Right lobe of liver (tissue), 6 donors: ENCODE measurements at regions of chr6 and their contacts with region 1.

Region 1: DNA sequence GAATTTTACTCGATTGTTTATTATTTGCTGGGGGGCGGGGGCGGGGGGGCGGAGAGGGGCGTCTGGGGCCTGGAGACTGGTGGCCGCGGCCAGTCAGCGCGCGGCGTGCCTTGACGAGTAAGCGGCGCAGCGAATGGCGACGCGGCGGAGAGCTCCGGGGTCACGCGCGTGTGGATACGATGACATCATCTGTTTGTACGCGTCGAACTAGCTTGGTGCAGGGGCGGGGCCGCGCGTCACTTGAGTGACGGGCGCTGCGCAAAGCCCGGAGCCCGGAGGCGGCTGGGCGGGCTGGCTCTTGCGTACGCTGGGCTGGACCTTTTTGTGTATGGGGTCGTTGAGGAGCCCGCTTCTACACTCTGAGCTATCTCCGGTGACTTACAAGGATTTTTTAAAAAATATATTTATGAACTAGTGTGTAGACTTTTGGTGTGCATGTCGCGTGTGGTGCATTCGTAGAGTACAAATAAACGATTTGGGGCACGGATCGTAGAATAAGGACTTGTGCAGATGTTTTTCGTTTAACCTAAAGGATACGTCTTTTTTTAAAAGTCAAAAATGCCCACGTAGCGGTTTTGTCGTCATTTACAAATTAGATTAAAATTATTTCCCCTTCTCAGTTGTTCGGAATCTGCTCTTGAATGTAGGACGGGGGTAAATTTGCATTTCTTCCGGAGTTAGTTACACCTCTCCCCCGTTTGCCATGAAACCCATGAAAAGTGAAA is 2.2 kb upstream of the FOXO3 start:
- DNase-seq: peak; percentile 99
- ATAC-seq: peak; percentile 58 to 75 (median 68)
- H3K4me3 ChIP-seq: peak overlapping the region; percentile 82 to 92 (median 83)
- H3K27ac ChIP-seq: peak overlapping the region; percentile 98 to 99 (median 99)
- H3K4me1 ChIP-seq: peaks cover 0 to 42% (median 12%) of the 10 kb centered on the region in 4 donors
- H3K27me3 ChIP-seq: no peaks in the 10 kb centered on the region
- CTCF ChIP-seq: no peak
- POLR2A ChIP-seq: peak; percentile 72

Region 2: DNA sequence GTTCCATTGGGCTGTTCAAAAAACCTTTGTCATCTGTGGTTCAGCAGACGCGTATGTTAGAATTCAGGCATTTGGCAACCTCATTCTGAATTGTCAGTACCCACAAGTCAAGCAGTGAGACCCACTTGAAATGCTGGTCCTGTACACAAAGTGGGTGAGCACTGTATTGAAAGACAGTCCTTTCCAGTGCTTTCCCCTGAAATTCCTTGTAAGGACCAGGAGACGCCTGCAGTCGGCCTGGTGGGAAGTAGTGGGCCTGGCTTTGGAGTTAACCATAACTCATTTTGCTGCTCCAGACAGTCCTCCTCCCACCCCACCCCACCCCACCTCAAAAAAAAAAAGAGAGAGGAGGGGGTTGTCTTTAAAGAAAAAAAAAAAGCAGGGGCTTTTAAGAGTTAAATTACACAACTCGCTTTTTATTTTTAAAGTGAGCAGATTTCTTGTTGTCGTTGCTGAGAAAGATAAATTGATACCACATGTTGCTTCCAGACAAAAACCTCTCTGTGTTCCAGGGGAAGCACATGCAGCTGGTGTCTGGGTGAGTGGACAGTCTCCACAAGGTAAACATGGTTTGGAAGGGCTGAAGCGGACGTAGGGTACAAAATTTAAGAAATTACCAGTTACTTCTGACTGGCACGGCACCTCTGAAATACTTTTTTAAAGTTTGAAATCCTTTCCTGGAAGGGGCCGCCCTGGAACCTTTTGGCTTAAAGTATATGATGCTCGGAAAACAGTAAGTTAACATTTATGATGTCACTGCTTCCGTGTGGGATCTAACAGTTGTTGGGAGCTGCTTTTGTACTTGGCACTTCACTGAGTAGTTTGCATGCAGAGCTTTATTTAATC is 97.5 kb after region 1 on chr6:
- intact Hi-C with region 1: loop called in 1 of 2 experiments (anchors 10 kb)
- DNase-seq: no peak
- ATAC-seq: peak; percentile 17 to 59 (median 26)
- H3K4me3 ChIP-seq: no peak overlapping the region
- H3K27ac ChIP-seq: peak overlapping the region; percentile 15 to 54 (median 42)
- H3K4me1 ChIP-seq: peaks cover 0 to 55% (median 28%) of the 10 kb centered on the region in 4 donors
- H3K27me3 ChIP-seq: no peaks in the 10 kb centered on the region
- CTCF ChIP-seq: no peak
- POLR2A ChIP-seq: no peak

Region 3: DNA sequence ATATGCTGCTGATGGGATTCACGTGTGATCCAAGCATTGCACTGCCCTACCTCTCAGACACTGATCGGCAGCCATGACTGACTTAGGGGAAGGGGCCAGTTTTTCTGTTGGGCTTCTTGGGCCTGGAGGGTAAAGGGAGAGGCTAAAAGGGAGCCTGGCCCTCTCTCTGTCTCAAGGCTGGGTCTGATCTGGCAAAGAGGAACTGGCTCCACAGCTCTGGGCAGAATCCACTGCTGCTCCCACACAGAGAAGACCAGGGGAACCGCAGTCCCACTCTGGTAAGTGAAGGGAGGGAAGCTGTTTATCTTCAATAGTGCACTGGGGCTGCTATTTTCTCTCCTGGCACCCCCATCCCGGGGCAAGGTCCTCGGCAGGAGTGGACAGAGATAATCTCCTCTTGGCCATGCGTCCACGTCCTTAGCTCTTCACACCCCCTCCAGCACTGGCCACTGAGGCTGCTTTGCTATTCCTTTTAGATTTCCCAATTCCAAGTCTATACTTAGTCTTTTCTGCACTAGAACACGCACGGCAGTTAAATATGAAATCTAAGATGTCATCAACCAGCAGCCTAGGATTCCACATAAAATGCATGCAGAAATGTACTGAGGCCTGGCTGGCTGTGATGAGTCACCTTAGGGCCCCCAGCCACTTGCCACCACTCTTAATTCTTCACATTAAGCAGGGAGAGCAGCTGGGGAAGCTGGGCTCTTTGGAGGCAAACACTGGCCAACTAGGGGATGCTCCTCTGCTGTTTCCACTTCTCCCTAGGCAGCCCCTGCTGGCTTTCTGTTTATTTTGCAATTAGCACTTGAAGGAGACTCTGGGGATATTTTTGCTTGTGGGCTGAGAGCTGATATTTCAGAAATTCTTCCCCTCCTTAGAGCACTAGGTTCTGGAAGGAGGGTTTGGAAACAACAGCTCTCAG is 201.9 kb after region 1 on chr6:
- intact Hi-C with region 1: loop called in 1 of 2 experiments (anchors 10 kb)
- DNase-seq: peak in 1 of 3 donors; percentile 63
- ATAC-seq: peak in 1 of 4 donors; percentile 6
- H3K4me3 ChIP-seq: no peak overlapping the region
- H3K27ac ChIP-seq: no peak overlapping the region
- H3K4me1 ChIP-seq: peaks cover 0 to 55% (median 25%) of the 10 kb centered on the region in 4 donors
- H3K27me3 ChIP-seq: no peaks in the 10 kb centered on the region
- CTCF ChIP-seq: no peak
- POLR2A ChIP-seq: no peak